T-cell (primary cell): ENCODE measurements at regions of chr18 and their contacts with region 1.

Region 1: GRCh38 chr18:24118750-24119577 is 19.9 kb upstream of the CABYR start:
- DNase-seq: peak; percentile 53 to 93 (median 72)
- ATAC-seq: peak; percentile 75 to 86 (median 82)
- H3K4me3 ChIP-seq: no peak overlapping the region
- H3K4me3 Mint-ChIP-seq: no peak overlapping the region
- H3K27ac ChIP-seq: peak overlapping the region; percentile 22
- H3K27ac Mint-ChIP-seq: peak overlapping the region; percentile 17 to 68
- H3K4me1 ChIP-seq: peaks cover 3 to 4% of the 10 kb centered on the region in 2 experiments
- H3K4me1 Mint-ChIP-seq: peaks cover 24 to 30% (median 27%) of the 10 kb centered on the region in 3 donors
- H3K27me3 ChIP-seq: no peaks in the 10 kb centered on the region
- H3K27me3 Mint-ChIP-seq: no peaks in the 10 kb centered on the region

Region 2: GRCh38 chr18:24153397-24153796 is 34.4 kb after region 1 on chr18:
- CTCF ChIA-PET with region 1: no interaction called
- POLR2A ChIA-PET with region 1: interaction called in 1 of 2 experiments, 11 read pairs
- DNase-seq: no peak
- ATAC-seq: no peak
- H3K4me3 ChIP-seq: no peak overlapping the region
- H3K4me3 Mint-ChIP-seq: no peak overlapping the region
- H3K27ac ChIP-seq: no peak overlapping the region
- H3K27ac Mint-ChIP-seq: no peak overlapping the region
- H3K4me1 ChIP-seq: no peaks in the 10 kb centered on the region
- H3K4me1 Mint-ChIP-seq: no peaks in the 10 kb centered on the region
- H3K27me3 ChIP-seq: peaks cover 0 to 2% of the 10 kb centered on the region in 2 experiments
- H3K27me3 Mint-ChIP-seq: no peaks in the 10 kb centered on the region